ENCODE measurements at regions of chr11 and their contacts with region 1.

Region 1: DNA sequence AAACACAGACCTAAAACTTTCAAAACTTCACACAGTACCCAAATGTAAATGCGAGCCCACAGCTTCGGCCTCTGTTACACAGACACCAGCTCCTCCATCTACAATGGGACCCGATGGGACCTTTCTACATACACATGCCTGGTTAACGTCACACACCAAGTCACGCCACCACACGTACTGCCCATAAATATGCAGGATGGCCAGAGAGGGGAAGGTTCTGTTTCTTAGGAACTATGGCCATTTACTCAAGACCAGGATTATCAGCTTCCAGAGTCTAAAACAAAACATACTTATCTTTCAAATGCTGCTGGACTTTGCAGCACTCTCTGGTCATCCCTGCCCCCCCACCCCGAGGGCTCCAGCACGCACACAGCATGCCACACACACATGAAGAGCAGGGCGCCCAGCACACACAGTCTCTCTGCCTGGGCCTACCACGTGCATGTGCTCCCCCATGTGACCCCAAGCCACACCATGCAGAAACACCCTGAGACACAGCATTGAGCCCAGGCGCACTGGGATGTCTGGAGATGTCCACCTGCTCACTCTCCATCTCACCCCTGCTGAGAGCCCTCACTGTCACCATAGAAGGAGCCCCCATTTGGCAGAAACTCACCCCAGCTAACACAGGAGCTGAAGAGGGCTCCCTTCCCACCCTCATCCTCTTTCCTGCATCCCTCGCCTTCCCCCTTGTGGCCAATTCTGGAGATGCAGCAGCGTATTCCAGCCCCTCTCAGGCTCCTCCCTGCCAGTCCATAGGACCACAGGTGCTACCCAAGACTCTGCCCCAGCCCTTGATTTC is 61.8 kb downstream of the SLC22A12 start:
- DNase-seq: peak; percentile 63
- ATAC-seq: peak; percentile 91
- H3K4me3 ChIP-seq: no peak overlapping the region
- H3K27ac ChIP-seq: no peak overlapping the region
- H3K4me1 ChIP-seq: peaks cover 0 to 9% of the 10 kb centered on the region in 2 experiments; a peak in 3 of 4 replicates
- H3K27me3 ChIP-seq: no peaks in the 10 kb centered on the region
- CTCF ChIP-seq: peak; percentile 88 to 96 (median 89)
- POLR2A ChIP-seq: no peak
- RAD21 ChIP-seq: peak; percentile 93

Region 2: GRCh38 chr11:64489831-64490441 is 162.9 kb before region 1 on chr11:
- CTCF ChIA-PET with region 1: interaction called, 16 read pairs
- POLR2A ChIA-PET with region 1: no interaction called
- RAD21 ChIA-PET with region 1: interaction called in 1 of 2 experiments, 4 read pairs
- intact Hi-C with region 1: loop called (anchors 1 kb)
- DNase-seq: peak; percentile 29
- ATAC-seq: peak; percentile 99
- H3K4me3 ChIP-seq: no peak overlapping the region
- H3K27ac ChIP-seq: no peak overlapping the region
- H3K4me1 ChIP-seq: no peaks in the 10 kb centered on the region
- H3K27me3 ChIP-seq: peaks cover 31% of the 10 kb centered on the region
- CTCF ChIP-seq: peak; percentile 76 to 91 (median 81); a peak in 5 of 6 replicates
- POLR2A ChIP-seq: no peak
- RAD21 ChIP-seq: peak; percentile 92

Region 3: DNA sequence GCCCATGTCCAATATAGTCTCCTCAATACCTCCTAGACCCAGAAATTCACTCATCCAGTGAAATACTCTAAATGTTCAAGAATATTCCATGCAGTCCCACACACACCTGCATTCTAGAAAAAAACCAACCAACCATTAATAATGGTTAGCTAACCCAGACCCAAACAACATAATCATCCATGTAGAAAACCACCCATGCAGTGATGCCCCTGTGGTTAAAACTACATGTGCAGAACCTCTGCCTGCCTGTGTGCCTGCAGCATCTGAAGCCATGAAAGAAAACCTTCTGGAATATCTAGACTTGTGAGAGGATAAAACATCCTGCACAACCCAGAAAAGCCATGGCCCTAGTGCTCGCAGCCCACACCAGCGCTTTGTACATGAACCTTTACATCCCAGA is 14.0 kb before region 1 on chr11:
- CTCF ChIA-PET with region 1: interaction called, 10 read pairs
- POLR2A ChIA-PET with region 1: no interaction called
- RAD21 ChIA-PET with region 1: no interaction called
- intact Hi-C with region 1: no loop called
- DNase-seq: no peak
- ATAC-seq: no peak
- H3K4me3 ChIP-seq: no peak overlapping the region
- H3K27ac ChIP-seq: no peak overlapping the region
- H3K4me1 ChIP-seq: no peaks in the 10 kb centered on the region
- H3K27me3 ChIP-seq: peaks cover 18% of the 10 kb centered on the region
- CTCF ChIP-seq: no peak
- POLR2A ChIP-seq: no peak
- RAD21 ChIP-seq: no peak